ENCODE measurements at regions of chr12 and their contacts with region 1.

Region 1: DNA sequence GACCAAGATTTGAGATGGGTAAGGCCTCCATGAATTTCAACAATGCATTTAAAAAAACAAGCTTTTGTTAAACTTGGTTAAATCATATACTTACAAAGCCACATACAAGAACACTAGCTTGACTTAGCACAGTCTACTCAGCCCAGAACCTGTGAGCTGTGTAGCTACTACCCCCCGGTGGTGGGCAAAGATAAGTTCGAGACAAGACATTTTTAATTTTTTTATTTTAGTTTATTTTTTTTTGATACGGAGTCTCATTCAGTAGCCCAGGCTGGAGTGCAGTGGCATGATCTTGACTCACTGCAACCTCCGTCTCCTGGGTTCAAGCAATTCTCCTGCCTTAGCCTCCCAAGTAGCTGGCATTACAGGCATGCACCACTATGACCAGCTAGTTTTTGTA is 3.7 kb upstream of the NECAP1 start:
- DNase-seq: peak; percentile 72
- ATAC-seq: peak; percentile 37
- H3K4me3 Mint-ChIP-seq: no peak overlapping the region
- H3K27ac Mint-ChIP-seq: peak overlapping the region; percentile 96
- H3K4me1 Mint-ChIP-seq: peaks cover 41% of the 10 kb centered on the region
- H3K27me3 Mint-ChIP-seq: no peaks in the 10 kb centered on the region
- CTCF ChIP-seq: peak; percentile 50

Region 2: DNA sequence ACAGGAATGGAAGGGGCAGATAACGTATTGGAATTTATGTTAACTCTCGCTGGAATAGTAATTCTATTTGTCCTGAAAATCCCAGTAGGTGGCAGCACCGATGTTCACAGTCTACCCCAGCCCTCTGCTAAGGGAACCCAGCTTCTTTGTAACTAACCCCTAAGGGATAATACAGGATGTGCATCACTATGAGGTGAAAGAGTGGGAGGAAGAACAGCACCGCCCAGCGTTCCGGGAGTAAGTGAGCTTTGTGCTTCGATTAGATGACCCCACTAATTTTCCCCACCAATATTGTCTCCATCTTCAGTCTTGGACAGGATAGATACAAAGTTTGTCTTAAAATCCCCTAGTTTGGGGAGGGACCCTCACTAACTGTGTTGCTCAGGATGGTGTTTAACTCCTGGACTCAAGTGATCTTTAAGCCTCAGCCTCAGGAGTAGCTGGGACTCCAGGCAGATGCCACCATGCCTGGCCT is 145.1 kb before region 1 on chr12:
- CTCF ChIA-PET with region 1: interaction called, 18 read pairs
- POLR2A ChIA-PET with region 1: interaction called, 3 read pairs
- intact Hi-C with region 1: loop called (anchors 1 kb)
- DNase-seq: peak; percentile 86
- ATAC-seq: peak; percentile 78
- H3K4me3 Mint-ChIP-seq: no peak overlapping the region
- H3K27ac Mint-ChIP-seq: no peak overlapping the region
- H3K4me1 Mint-ChIP-seq: peaks cover 33% of the 10 kb centered on the region
- H3K27me3 Mint-ChIP-seq: no peaks in the 10 kb centered on the region
- CTCF ChIP-seq: peak; percentile 79

Region 3: DNA sequence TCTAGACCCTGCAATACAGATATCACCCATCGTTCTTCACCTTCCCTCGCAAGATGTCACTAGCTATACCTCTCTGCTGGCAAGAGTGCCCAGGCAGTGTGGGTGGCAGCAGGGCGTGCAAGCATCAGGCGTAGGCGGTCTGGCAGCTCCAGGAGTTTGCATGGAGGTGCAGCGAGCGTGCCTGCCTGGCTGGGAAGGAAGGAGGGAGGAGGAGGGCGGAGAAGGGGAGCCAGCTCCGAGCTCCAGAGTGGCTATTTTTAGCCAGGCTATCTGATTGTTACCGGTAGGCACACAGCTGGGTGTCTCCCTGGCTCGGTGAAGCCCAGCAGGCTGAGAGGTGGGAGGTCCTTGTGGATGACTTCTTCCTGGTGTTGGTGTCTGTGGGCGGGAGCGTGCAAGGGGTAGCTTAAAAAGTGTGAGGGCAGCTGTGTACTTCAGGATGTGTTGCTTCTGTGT is 39.7 kb before region 1 on chr12:
- CTCF ChIA-PET with region 1: interaction called, 269 read pairs
- POLR2A ChIA-PET with region 1: interaction called, 5 read pairs
- intact Hi-C with region 1: no loop called
- DNase-seq: peak; percentile 67
- ATAC-seq: peak; percentile 74
- H3K4me3 Mint-ChIP-seq: peak overlapping the region; percentile 64
- H3K27ac Mint-ChIP-seq: peak overlapping the region; percentile 50
- H3K4me1 Mint-ChIP-seq: peaks cover 56% of the 10 kb centered on the region
- H3K27me3 Mint-ChIP-seq: no peaks in the 10 kb centered on the region
- CTCF ChIP-seq: no peak

Region 4: DNA sequence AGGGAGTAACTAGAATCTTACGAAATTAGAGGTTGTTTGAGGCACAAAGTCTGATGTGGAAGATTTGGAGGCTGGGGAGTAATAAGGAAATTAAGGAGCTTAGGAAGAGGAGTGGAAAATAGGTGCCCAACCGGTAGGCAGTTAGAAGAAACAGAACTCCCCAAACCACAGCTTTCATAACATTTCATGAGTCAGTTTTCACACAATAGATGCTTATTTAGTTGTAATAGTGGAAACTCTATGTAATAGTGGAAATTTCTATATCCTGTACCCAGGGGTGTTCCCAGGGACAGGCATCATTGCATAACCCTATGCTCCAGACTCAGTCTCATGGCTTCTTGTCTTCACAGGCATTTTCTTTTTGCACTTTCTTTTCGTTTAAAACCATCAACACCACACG is 20.6 kb before region 1 on chr12:
- CTCF ChIA-PET with region 1: interaction called, 269 read pairs
- POLR2A ChIA-PET with region 1: interaction called, 4 read pairs
- intact Hi-C with region 1: no loop called
- DNase-seq: no peak
- ATAC-seq: no peak
- H3K4me3 Mint-ChIP-seq: no peak overlapping the region
- H3K27ac Mint-ChIP-seq: no peak overlapping the region
- H3K4me1 Mint-ChIP-seq: peaks cover 19% of the 10 kb centered on the region
- H3K27me3 Mint-ChIP-seq: no peaks in the 10 kb centered on the region
- CTCF ChIP-seq: no peak

Region 5: GRCh38 chr12:8088574-8088973 is 10.2 kb after region 1 on chr12:
- CTCF ChIA-PET with region 1: interaction called, 21 read pairs
- POLR2A ChIA-PET with region 1: interaction called, 4 read pairs
- intact Hi-C with region 1: no loop called
- DNase-seq: peak; percentile 67
- ATAC-seq: peak; percentile 77
- H3K4me3 Mint-ChIP-seq: peak overlapping the region; percentile 52
- H3K27ac Mint-ChIP-seq: peak overlapping the region; percentile 94
- H3K4me1 Mint-ChIP-seq: peaks cover 45% of the 10 kb centered on the region
- H3K27me3 Mint-ChIP-seq: no peaks in the 10 kb centered on the region
- CTCF ChIP-seq: no peak

Measured in activated CD8-positive, alpha-beta T cell treated with anti-CD3 and anti-CD28 coated beads for 36 hours (primary cell).